GM12878 (cell line): ENCODE measurements at regions of chr4 and their contacts with region 1.

Region 1: GRCh38 chr4:17576932-17577665 is at the start of gene LAP3:
- DNase-seq: peak; percentile 91
- ATAC-seq: peak; percentile 90
- H3K4me3 ChIP-seq: peak within 1 kb of the TSS; percentile 97
- H3K27ac ChIP-seq: peak within 1 kb of the TSS; percentile 96
- H3K4me1 ChIP-seq: peaks cover 7% of the 10 kb centered on the region
- H3K27me3 ChIP-seq: no peaks in the 10 kb centered on the region
- CTCF ChIP-seq: no peak
- EP300 ChIP-seq: no peak
- POLR2A ChIP-seq: peak; percentile 99
- RAD21 ChIP-seq: no peak
- polyA plus RNA-seq, gene LAP3: 153 to 206 TPM

Region 2: DNA sequence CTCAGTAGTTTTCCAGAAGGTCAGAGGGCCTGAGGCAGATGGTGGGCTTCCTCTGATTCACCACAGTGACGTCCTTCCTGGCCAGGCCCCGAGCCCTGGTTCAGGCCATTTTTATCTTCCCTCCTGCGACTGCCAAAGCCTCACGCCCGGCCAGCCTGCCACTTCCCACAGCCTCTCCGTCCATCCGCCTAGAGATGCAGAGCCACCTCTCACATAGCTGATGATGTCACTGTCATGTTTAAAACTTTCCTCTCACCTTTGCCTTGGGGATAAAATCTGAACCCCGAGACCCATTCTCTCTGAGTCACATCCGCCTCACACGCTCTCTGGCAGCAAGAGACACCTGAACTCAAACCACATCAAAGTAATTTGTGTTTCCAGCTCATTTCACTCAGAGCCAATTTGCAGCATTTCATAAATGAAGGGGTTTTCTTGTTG is 240.6 kb before region 1 on chr4:
- CTCF ChIA-PET with region 1: no interaction called
- POLR2A ChIA-PET with region 1: interaction called, 3 read pairs
- RAD21 ChIA-PET with region 1: no interaction called
- SMC1A ChIA-PET with region 1: no interaction called
- in situ Hi-C with region 1: no loop called
- intact Hi-C with region 1: loop called (anchors 5 kb)
- DNase-seq: peak; percentile 93
- ATAC-seq: peak; percentile 93
- H3K4me3 ChIP-seq: no peak overlapping the region
- H3K27ac ChIP-seq: no peak overlapping the region
- H3K4me1 ChIP-seq: peaks cover 8% of the 10 kb centered on the region
- H3K27me3 ChIP-seq: no peaks in the 10 kb centered on the region
- CTCF ChIP-seq: no peak
- EP300 ChIP-seq: peak; percentile 84 to 92
- POLR2A ChIP-seq: no peak
- RAD21 ChIP-seq: no peak

Region 3: GRCh38 chr4:17597517-17597916 is 20.4 kb after region 1 on chr4:
- CTCF ChIA-PET with region 1: interaction called, 3 read pairs
- POLR2A ChIA-PET with region 1: interaction called, 9 read pairs
- RAD21 ChIA-PET with region 1: interaction called, 5 read pairs
- SMC1A ChIA-PET with region 1: interaction called, 8 read pairs
- in situ Hi-C with region 1: no loop called
- intact Hi-C with region 1: loop called (anchors 2 kb)
- DNase-seq: no peak
- ATAC-seq: no peak
- H3K4me3 ChIP-seq: no peak overlapping the region
- H3K27ac ChIP-seq: no peak overlapping the region
- H3K4me1 ChIP-seq: peaks cover 23% of the 10 kb centered on the region
- H3K27me3 ChIP-seq: no peaks in the 10 kb centered on the region
- CTCF ChIP-seq: peak in 2 of 3 experiments; percentile 7 to 24; a peak in 1 of 6 replicates
- EP300 ChIP-seq: no peak
- POLR2A ChIP-seq: no peak
- RAD21 ChIP-seq: 0 out of 2 replicates have a peak, but pooled peaks have one; percentile 9

Region 4: DNA sequence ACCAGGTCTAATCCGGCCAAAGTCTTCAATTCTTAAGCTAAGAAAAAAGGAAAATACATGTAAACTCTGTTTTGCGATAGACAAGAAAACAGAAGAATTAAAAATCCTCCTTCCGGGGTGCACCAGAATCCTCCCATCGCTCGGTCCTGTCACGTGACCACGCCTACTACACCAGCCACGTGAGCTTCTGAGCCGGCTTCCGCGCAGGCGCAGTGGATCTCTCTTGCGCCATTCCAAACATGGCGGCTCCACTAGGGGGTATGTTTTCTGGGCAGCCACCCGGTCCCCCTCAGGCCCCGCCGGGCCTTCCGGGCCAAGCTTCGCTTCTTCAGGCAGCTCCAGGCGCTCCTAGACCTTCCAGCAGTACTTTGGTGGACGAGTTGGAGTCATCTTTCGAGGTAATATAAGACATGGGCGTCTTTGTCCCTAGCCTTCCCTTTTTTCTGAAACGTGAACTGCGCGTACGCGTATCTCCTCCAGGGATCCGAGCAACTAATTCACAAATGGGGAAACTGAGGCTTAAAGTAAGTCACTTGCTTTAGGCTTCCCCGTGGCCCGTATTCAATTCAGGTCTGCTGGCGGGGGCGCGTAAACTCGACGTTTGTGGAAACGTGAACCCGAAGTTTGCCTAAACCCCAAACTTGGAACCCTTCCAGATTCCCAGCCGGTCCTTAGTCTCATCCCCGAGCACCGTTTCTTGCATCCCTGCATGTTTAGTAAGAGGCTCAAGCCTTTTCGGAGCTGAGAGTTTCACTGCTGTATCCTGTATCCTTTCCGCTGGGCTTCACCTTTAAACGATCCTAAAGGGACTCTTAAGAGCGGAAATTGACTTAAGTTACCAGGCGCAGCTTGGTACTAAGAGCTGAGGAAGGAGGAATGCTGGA is 37.6 kb after region 1 on chr4 and contains the start of gene MED28:
- CTCF ChIA-PET with region 1: interaction called, 7 read pairs
- POLR2A ChIA-PET with region 1: interaction called, 17 read pairs
- RAD21 ChIA-PET with region 1: interaction called, 6 read pairs
- SMC1A ChIA-PET with region 1: interaction called, 9 read pairs
- in situ Hi-C with region 1: no loop called
- intact Hi-C with region 1: loop called (anchors 1 kb)
- DNase-seq: peak; percentile 68
- ATAC-seq: peak; percentile 89
- H3K4me3 ChIP-seq: peak within 1 kb of the TSS; percentile 79
- H3K27ac ChIP-seq: peak within 1 kb of the TSS; percentile 84
- H3K4me1 ChIP-seq: peaks cover 6% of the 10 kb centered on the region; the same call in 1 of the 2 replicates
- H3K27me3 ChIP-seq: no peaks in the 10 kb centered on the region
- CTCF ChIP-seq: 0 out of 6 replicates have a peak, but pooled peaks of 1 of the 3 experiments have one; percentile 2
- EP300 ChIP-seq: no peak
- POLR2A ChIP-seq: peak; percentile 91
- RAD21 ChIP-seq: no peak
- polyA plus RNA-seq, gene MED28: 44.4 to 77.4 TPM

Region 5: GRCh38 chr4:17646693-17647092 is 69.6 kb after region 1 on chr4:
- CTCF ChIA-PET with region 1: no interaction called
- POLR2A ChIA-PET with region 1: no interaction called
- RAD21 ChIA-PET with region 1: no interaction called
- SMC1A ChIA-PET with region 1: no interaction called
- in situ Hi-C with region 1: no loop called
- intact Hi-C with region 1: no loop called
- DNase-seq: no peak
- ATAC-seq: no peak
- H3K4me3 ChIP-seq: no peak overlapping the region
- H3K27ac ChIP-seq: no peak overlapping the region
- H3K4me1 ChIP-seq: no peaks in the 10 kb centered on the region
- H3K27me3 ChIP-seq: no peaks in the 10 kb centered on the region
- CTCF ChIP-seq: no peak
- EP300 ChIP-seq: no peak
- POLR2A ChIP-seq: no peak
- RAD21 ChIP-seq: no peak

Region 6: DNA sequence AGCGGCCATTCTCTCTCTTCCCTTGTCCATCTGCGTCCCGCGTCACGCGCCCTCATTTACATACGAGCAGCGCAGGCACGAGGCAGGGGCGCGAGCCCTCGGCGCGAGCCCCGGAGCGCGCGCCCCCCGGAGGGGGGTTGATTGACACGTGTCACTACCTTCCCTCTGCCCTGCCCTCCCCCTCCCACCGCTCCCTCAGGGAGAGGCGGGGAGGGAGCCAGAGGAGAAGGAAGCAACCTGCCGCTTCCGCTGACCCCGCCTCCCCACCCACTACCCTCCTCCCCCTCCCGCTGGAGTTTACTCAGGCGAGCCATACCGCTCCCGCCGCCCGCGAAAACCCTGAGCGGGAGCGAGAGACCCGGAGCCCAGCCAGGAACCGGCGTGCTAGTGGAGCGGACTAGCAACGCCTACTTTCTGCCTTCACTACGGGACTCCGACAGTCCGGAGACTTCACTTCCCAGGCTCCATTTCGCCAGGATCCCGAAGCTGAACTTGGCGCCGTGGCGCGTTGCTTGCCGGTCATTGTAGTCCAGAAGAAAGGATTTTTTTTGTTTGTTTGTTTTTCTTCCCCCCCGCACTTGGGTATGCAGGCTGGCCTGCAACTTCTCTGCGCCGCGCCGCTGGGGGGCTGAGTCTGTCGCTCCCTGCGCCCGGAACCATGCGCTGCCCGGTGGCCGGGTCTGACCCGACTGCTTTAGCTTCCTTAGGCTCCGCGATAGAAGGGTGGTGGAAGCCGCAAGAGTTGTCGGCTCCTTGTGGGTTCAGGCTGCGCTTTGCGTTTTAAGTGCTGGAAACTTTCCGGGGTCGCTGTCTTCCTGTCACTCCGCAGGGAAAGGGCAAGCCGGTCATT is 444.8 kb after region 1 on chr4 and contains the start of gene LCORL:
- CTCF ChIA-PET with region 1: no interaction called
- POLR2A ChIA-PET with region 1: interaction called, 3 read pairs
- RAD21 ChIA-PET with region 1: interaction called, 3 read pairs
- SMC1A ChIA-PET with region 1: no interaction called
- in situ Hi-C with region 1: loop called (anchors 10 kb)
- intact Hi-C with region 1: loop called (anchors 2 kb)
- DNase-seq: peak; percentile 90
- ATAC-seq: peak; percentile 87
- H3K4me3 ChIP-seq: peak within 1 kb of the TSS; percentile 90
- H3K27ac ChIP-seq: peak within 1 kb of the TSS; percentile 84
- H3K4me1 ChIP-seq: no peaks in the 10 kb centered on the region; the same call in 1 of the 2 replicates
- H3K27me3 ChIP-seq: no peaks in the 10 kb centered on the region
- CTCF ChIP-seq: peak; percentile 29 to 45 (median 35); a peak in 4 of 6 replicates
- EP300 ChIP-seq: no peak
- POLR2A ChIP-seq: peak; percentile 77
- RAD21 ChIP-seq: peak; percentile 43; the same call in 1 of the 2 replicates
- polyA plus RNA-seq, gene LCORL: 2.2 to 3.3 TPM